Activated B cell treated with CpG ODN at 0.5 μM for 24 hours (primary cell): ENCODE measurements at regions of chr22 and their contacts with region 1.

Region 1: DNA sequence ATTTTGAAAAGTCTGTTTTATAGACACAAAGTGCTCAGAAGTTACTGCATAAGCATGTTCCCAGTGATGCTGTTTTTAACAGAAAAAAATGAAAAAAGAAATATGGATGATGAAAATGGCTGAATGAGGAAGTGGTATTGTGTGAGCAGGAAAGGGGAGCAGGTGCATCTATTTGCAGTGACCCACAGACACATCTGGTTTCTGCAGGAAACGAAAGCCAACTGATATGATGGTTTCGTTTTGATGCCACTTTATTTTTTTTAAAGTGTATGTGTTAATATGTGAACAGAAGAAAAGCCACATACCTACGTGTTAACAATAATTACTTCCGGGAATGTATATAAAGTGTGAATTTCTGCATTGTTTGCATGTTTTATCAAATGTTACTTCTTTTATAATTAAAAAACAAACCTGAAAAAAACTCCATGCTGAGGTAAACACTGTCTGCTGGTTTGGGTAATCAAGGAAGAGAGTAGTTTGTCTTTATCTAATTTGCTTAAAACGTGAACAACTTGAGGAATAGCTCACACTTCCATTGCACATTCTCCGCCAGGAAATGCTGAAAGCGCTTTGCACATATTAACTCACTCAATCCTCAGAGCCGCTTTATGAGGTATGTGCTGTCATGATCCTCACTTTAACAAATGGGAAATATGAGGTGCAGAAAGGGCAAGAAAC is 1335.9 kb downstream of the TBC1D22A start:
- DNase-seq: no peak
- ATAC-seq: peak; percentile 83
- H3K4me3 Mint-ChIP-seq: peak overlapping the region; percentile 59
- H3K27ac Mint-ChIP-seq: peak overlapping the region; percentile 92
- H3K4me1 Mint-ChIP-seq: peaks cover 88% of the 10 kb centered on the region
- H3K27me3 Mint-ChIP-seq: no peaks in the 10 kb centered on the region
- CTCF ChIP-seq: no peak

Region 2: GRCh38 chr22:47918276-47918921 is 180.0 kb before region 1 on chr22:
- CTCF ChIA-PET with region 1: no interaction called
- POLR2A ChIA-PET with region 1: no interaction called
- intact Hi-C with region 1: loop called (anchors 2 kb)
- DNase-seq: no peak
- ATAC-seq: peak; percentile 72
- H3K4me3 Mint-ChIP-seq: no peak overlapping the region
- H3K27ac Mint-ChIP-seq: no peak overlapping the region
- H3K4me1 Mint-ChIP-seq: peaks cover 32% of the 10 kb centered on the region
- H3K27me3 Mint-ChIP-seq: peaks cover 2% of the 10 kb centered on the region
- CTCF ChIP-seq: no peak

Region 3: GRCh38 chr22:47996446-47996857 is 101.9 kb before region 1 on chr22:
- CTCF ChIA-PET with region 1: no interaction called
- POLR2A ChIA-PET with region 1: no interaction called
- intact Hi-C with region 1: loop called (anchors 2 kb)
- DNase-seq: peak; percentile 25
- ATAC-seq: peak; percentile 83
- H3K4me3 Mint-ChIP-seq: no peak overlapping the region
- H3K27ac Mint-ChIP-seq: peak overlapping the region; percentile 42
- H3K4me1 Mint-ChIP-seq: peaks cover 23% of the 10 kb centered on the region
- H3K27me3 Mint-ChIP-seq: peaks cover 1% of the 10 kb centered on the region
- CTCF ChIP-seq: no peak

Region 4: GRCh38 chr22:48444320-48445112 is 346.1 kb after region 1 on chr22:
- CTCF ChIA-PET with region 1: no interaction called
- POLR2A ChIA-PET with region 1: interaction called, 4 read pairs
- intact Hi-C with region 1: loop called (anchors 5 kb)
- DNase-seq: peak; percentile 34
- ATAC-seq: peak; percentile 91
- H3K4me3 Mint-ChIP-seq: no peak overlapping the region
- H3K27ac Mint-ChIP-seq: no peak overlapping the region
- H3K4me1 Mint-ChIP-seq: peaks cover 19% of the 10 kb centered on the region
- H3K27me3 Mint-ChIP-seq: peaks cover 29% of the 10 kb centered on the region
- CTCF ChIP-seq: no peak

Region 5: GRCh38 chr22:49046546-49047361 is 948.4 kb after region 1 on chr22:
- CTCF ChIA-PET with region 1: no interaction called
- POLR2A ChIA-PET with region 1: no interaction called
- intact Hi-C with region 1: no loop called
- DNase-seq: no peak
- ATAC-seq: peak; percentile 49
- H3K4me3 Mint-ChIP-seq: no peak overlapping the region
- H3K27ac Mint-ChIP-seq: no peak overlapping the region
- H3K4me1 Mint-ChIP-seq: no peaks in the 10 kb centered on the region
- H3K27me3 Mint-ChIP-seq: no peaks in the 10 kb centered on the region
- CTCF ChIP-seq: no peak